Breast epithelium (tissue), 4 donors: ENCODE measurements at regions of chr4 and their contacts with region 1.

Region 1: GRCh38 chr4:171621646-171622045 is 191.6 kb upstream of the GALNTL6 start:
- DNase-seq: no peak
- H3K4me3 ChIP-seq: no peak overlapping the region
- H3K27ac ChIP-seq: no peak overlapping the region
- H3K4me1 ChIP-seq: no peaks in the 10 kb centered on the region
- H3K27me3 ChIP-seq: no peaks in the 10 kb centered on the region
- CTCF ChIP-seq: no peak
- POLR2A ChIP-seq: no peak

Region 2: GRCh38 chr4:172809324-172809723 is 1187.7 kb after region 1 on chr4:
- intact Hi-C with region 1: loop called (anchors 5 kb)
- DNase-seq: no peak
- H3K4me3 ChIP-seq: no peak overlapping the region
- H3K27ac ChIP-seq: no peak overlapping the region
- H3K4me1 ChIP-seq: no peaks in the 10 kb centered on the region
- H3K27me3 ChIP-seq: no peaks in the 10 kb centered on the region
- CTCF ChIP-seq: no peak
- POLR2A ChIP-seq: no peak